Esophagus muscularis mucosa (tissue), 4 donors: ENCODE measurements at regions of chr12 and their contacts with region 1.

Region 1: DNA sequence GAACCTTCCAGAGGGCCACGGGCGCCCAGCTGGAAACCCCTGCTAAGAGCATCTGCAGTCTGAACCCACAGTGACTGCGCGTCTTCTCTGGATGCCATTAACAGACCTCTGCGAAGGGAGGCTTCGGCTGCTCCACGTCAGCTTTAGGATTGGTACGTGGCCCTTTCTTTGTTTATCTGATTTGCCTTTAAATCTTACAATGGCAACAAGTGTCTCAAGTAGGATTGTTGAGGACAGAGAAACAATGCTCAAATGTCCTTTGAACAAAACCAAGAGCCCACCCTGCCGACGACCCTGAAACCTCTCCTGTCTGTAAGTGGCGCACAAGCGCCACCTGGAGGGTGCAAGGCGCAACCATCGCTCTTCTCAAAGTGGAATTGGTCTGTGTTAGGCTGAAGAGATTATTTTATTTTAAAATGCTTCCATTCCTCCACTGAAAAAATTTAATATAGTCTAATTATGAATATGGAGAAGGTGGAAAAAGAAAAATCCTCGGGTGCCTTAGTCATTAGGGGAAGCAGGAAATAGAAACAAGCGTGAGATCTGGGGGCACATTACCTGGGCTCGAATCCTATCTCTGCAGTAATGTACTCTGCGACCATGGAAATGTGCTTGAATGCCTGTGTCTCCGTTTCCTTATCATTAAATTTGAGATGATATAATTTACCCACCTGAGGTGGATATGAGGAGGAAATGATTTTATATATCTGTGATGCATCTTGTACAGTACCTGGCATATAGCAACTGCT is 82.6 kb upstream of the PTPRB start:
- DNase-seq: no peak
- H3K4me3 ChIP-seq: peak overlapping the region; percentile 22 to 26 (median 24)
- H3K27ac ChIP-seq: peak overlapping the region; percentile 4 to 51 (median 31)
- H3K4me1 ChIP-seq: peaks cover 0 to 11% (median 1%) of the 10 kb centered on the region in 4 donors
- H3K27me3 ChIP-seq: peaks cover 0 to 17% (median 0%) of the 10 kb centered on the region in 4 donors
- CTCF ChIP-seq: peak; percentile 73 to 77 (median 73)
- EP300 ChIP-seq: no peak
- POLR2A ChIP-seq: no peak

Region 2: GRCh38 chr12:69879041-69879960 is 840.5 kb before region 1 on chr12:
- intact Hi-C with region 1: loop called (anchors 5 kb)
- DNase-seq: no peak
- H3K4me3 ChIP-seq: peak overlapping the region; percentile 18 to 46 (median 28)
- H3K27ac ChIP-seq: no peak overlapping the region
- H3K4me1 ChIP-seq: peaks cover 6 to 9% (median 7%) of the 10 kb centered on the region in 4 donors
- H3K27me3 ChIP-seq: peaks cover 0 to 16% (median 3%) of the 10 kb centered on the region in 4 donors
- CTCF ChIP-seq: peak; percentile 81 to 89 (median 85)
- EP300 ChIP-seq: no peak
- POLR2A ChIP-seq: no peak

Region 3: DNA sequence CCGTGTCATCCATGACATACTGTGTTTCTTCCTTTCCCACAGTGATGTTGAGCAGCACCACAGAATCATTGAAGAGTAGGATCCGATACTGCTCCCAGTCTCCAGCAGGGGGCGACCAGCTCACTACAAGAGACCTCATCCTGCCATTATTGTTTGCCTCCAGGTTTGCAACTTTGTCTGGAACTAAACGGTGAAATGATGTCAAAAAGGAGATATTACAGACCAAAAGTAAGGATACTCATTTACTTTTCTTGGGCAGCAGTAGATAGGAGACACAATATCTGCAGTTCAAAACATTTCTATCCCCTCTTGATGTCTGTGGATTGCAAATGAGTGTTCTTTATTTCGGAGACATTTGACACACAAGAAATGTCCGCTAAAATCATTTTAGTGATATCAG is 129.8 kb before region 1 on chr12:
- intact Hi-C with region 1: loop called (anchors 5 kb)
- DNase-seq: no peak
- H3K4me3 ChIP-seq: no peak overlapping the region
- H3K27ac ChIP-seq: no peak overlapping the region
- H3K4me1 ChIP-seq: no peaks in the 10 kb centered on the region
- H3K27me3 ChIP-seq: peaks cover 0 to 5% (median 0%) of the 10 kb centered on the region in 4 donors
- CTCF ChIP-seq: peak; percentile 69 to 79 (median 71)
- EP300 ChIP-seq: no peak
- POLR2A ChIP-seq: no peak

Region 4: GRCh38 chr12:70619471-70620152 is 100.2 kb before region 1 on chr12:
- intact Hi-C with region 1: no loop called
- DNase-seq: no peak
- H3K4me3 ChIP-seq: no peak overlapping the region
- H3K27ac ChIP-seq: no peak overlapping the region
- H3K4me1 ChIP-seq: peaks cover 0 to 5% (median 2%) of the 10 kb centered on the region in 4 donors
- H3K27me3 ChIP-seq: no peaks in the 10 kb centered on the region
- CTCF ChIP-seq: no peak
- EP300 ChIP-seq: no peak
- POLR2A ChIP-seq: no peak